ENCODE measurements at regions of chr5 and their contacts with region 1.

Region 1: DNA sequence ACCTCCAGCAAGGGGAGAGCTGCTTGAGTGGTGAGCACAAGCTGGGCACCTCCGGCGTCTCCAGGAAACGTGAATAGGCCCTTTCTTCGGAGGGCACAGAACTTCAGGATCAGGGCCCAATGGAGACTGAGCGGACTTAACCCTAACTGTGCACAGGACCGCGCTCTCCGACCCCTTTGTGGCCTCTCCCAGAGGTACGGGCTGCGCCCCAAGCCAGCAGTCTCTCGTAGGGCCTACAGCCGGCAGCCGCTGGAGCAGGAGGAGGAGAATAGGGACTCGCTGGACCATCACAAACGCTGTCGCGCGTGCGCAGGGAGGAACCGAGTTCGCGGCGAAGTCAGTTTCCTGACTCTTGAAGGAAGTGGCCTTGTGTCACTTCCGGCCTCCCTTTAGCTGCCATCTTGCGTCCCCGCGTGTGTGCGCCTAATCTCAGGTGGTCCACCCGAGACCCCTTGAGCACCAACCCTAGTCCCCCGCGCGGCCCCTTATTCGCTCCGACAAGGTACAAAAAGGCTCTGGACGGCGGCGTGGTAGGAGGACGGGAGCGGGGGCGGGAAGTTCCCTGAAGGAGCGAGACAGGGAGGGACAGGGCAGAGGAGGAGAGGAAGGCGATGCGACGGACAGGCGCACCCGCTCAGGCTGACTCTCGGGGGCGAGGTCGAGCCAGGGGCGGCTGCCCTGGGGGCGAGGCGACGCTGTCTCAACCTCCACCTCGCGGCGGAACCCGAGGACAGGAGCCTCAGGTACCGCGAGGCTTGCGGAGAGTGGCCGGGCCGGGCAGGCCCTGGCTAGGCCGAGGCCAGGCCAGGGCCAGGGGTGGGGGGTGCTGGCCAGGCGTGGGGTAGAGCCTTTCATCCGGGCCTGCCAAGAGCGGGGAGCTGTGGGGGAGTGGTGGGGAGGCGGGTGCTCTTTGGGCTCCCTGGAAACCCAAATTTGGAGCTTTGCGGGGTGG is at the start of gene BTF3:
- DNase-seq: peak; percentile 97
- ATAC-seq: peak; percentile 95
- H3K4me3 Mint-ChIP-seq: peak within 1 kb of the TSS; percentile 98
- H3K27ac Mint-ChIP-seq: peak within 1 kb of the TSS; percentile 100
- H3K4me1 Mint-ChIP-seq: peaks cover 31% of the 10 kb centered on the region
- H3K27me3 Mint-ChIP-seq: peaks cover 5% of the 10 kb centered on the region
- total RNA-seq, gene BTF3: 737 to 768 TPM

Region 2: GRCh38 chr5:72465601-72466563 is 1032.5 kb before region 1 on chr5:
- CTCF ChIA-PET with region 1: no interaction called
- POLR2A ChIA-PET with region 1: no interaction called
- DNase-seq: no peak
- ATAC-seq: no peak
- H3K4me3 Mint-ChIP-seq: no peak overlapping the region
- H3K27ac Mint-ChIP-seq: no peak overlapping the region
- H3K4me1 Mint-ChIP-seq: no peaks in the 10 kb centered on the region
- H3K27me3 Mint-ChIP-seq: no peaks in the 10 kb centered on the region

Region 3: GRCh38 chr5:73565139-73565968 is 67.0 kb after region 1 on chr5 and contains the starts of genes ANKRA2 and UTP15:
- CTCF ChIA-PET with region 1: interaction called, 4 read pairs
- POLR2A ChIA-PET with region 1: interaction called, 20 read pairs
- DNase-seq: peak; percentile 99
- ATAC-seq: peak; percentile 93
- H3K4me3 Mint-ChIP-seq: peak within 1 kb of the TSS; percentile 91
- H3K27ac Mint-ChIP-seq: peak within 1 kb of the TSS; percentile 99
- H3K4me1 Mint-ChIP-seq: peaks cover 41% of the 10 kb centered on the region
- H3K27me3 Mint-ChIP-seq: no peaks in the 10 kb centered on the region
- total RNA-seq, gene ANKRA2: 12.4 to 13.4 TPM
- total RNA-seq, gene UTP15: 22.9 to 23.8 TPM

Measured in activated CD8-positive, alpha-beta T cell treated with anti-CD3 and anti-CD28 coated beads, Interleukin-2, amount 10 ng/mL, durations not matched to agents 7 days and 5 days (primary cell).